Calu3 (cell line): ENCODE measurements at regions of chr2 and their contacts with region 1.

Region 1: DNA sequence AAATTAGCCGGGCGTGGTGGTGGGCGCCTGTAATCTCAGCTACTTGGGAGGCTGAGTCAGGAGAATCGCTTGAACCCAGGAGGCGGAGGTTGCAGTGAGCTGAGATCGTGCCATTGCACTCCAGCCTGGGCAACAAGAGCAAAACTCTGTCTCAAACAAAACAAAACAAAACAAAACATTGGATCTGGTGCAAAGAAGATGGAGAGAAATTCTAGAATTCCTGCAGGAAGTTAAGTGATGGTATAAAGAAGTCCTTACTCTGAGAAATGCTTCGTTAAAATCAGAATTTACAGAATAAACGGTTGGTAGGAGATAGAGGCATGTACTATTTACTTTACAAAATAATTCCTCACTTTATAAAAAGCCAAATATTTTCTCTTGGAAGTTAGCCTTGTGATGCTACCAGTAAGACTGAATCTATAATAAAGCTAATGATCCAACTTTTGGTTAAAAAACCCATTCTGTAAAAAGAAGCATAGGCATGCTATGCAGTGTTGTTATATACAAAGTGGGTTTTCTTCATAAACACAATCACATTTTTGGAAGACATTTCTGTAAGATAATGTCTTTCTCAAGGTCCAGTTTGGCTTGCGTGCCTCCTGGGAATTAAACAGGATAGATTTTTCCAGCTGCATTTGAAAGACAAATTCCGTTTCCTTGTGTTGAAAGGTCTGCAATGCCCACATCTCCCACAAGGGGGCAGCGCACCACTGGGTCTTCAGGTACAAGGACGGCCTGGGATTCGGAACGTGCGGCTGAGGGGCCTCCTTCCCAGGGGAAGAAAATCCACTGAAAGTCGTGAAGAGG is 35.6 kb upstream of the PNO1 start:
- DNase-seq: peak; percentile 87
- H3K4me3 Mint-ChIP-seq: no peak overlapping the region
- H3K27ac Mint-ChIP-seq: no peak overlapping the region
- H3K4me1 Mint-ChIP-seq: no peaks in the 10 kb centered on the region
- H3K27me3 Mint-ChIP-seq: no peaks in the 10 kb centered on the region
- CTCF ChIP-seq: peak; percentile 88

Region 2: DNA sequence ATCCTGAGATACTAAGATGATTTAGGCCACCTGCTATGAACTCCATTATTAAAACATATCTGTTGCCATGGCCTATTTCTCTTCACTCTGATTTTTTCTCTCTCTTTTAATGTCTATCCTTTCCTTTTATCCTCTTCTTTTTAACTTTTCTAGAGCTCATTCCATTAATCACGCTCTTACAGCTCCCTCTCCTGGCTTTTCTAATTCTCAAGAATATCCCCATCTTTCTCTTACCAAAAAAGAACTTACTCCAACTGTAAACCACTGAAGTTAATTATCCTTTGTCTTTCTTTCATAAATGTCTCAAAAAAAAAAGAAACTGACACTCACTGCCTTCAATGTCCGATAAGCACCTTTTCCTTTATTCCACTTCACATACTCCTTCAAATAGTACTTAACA is 122.4 kb after region 1 on chr2:
- CTCF ChIA-PET with region 1: interaction called, 12 read pairs
- intact Hi-C with region 1: no loop called
- DNase-seq: no peak
- H3K4me3 Mint-ChIP-seq: no peak overlapping the region
- H3K27ac Mint-ChIP-seq: no peak overlapping the region
- H3K4me1 Mint-ChIP-seq: peaks cover 11% of the 10 kb centered on the region
- H3K27me3 Mint-ChIP-seq: no peaks in the 10 kb centered on the region
- CTCF ChIP-seq: no peak

Region 3: DNA sequence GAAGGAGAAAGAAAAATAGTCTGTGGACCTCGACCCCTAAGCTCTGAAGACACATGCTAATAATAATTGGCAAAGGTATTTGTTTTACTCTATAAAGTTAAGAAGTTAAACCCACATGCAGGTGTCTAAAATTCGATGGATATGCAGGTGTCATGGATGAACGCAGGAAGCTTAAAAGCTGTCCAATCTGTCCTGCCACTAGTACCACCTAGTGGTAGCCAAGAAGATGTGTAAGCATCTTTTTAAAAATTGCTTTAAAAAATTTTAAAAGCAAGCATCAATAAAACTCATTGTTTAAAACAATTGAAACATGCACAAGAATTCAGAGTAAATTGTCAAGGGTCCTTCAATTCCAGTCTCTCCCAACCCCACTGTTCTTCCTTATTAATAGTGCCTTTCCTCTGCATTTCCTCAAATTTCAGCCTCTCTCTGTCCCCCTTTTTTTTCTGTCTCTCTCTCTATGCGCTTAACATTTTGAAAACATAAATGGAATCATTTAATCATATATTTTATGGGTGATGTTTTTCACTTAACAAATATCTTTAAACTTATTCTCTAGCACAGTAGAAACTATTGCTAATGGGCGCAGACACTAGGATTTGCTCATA is 160.8 kb after region 1 on chr2:
- CTCF ChIA-PET with region 1: interaction called, 11 read pairs
- intact Hi-C with region 1: loop called (anchors 1 kb)
- DNase-seq: peak; percentile 16
- H3K4me3 Mint-ChIP-seq: no peak overlapping the region
- H3K27ac Mint-ChIP-seq: no peak overlapping the region
- H3K4me1 Mint-ChIP-seq: no peaks in the 10 kb centered on the region
- H3K27me3 Mint-ChIP-seq: peaks cover 45% of the 10 kb centered on the region
- CTCF ChIP-seq: peak; percentile 66

Region 4: GRCh38 chr2:68291314-68291713 is 169.2 kb after region 1 on chr2:
- CTCF ChIA-PET with region 1: interaction called, 10 read pairs
- intact Hi-C with region 1: no loop called
- DNase-seq: no peak
- H3K4me3 Mint-ChIP-seq: no peak overlapping the region
- H3K27ac Mint-ChIP-seq: no peak overlapping the region
- H3K4me1 Mint-ChIP-seq: no peaks in the 10 kb centered on the region
- H3K27me3 Mint-ChIP-seq: peaks cover 24% of the 10 kb centered on the region
- CTCF ChIP-seq: no peak

Region 5: GRCh38 chr2:68429311-68429826 is 307.3 kb after region 1 on chr2:
- CTCF ChIA-PET with region 1: no interaction called
- intact Hi-C with region 1: no loop called
- DNase-seq: no peak
- H3K4me3 Mint-ChIP-seq: no peak overlapping the region
- H3K27ac Mint-ChIP-seq: no peak overlapping the region
- H3K4me1 Mint-ChIP-seq: no peaks in the 10 kb centered on the region
- H3K27me3 Mint-ChIP-seq: peaks cover 21% of the 10 kb centered on the region
- CTCF ChIP-seq: no peak

Region 6: DNA sequence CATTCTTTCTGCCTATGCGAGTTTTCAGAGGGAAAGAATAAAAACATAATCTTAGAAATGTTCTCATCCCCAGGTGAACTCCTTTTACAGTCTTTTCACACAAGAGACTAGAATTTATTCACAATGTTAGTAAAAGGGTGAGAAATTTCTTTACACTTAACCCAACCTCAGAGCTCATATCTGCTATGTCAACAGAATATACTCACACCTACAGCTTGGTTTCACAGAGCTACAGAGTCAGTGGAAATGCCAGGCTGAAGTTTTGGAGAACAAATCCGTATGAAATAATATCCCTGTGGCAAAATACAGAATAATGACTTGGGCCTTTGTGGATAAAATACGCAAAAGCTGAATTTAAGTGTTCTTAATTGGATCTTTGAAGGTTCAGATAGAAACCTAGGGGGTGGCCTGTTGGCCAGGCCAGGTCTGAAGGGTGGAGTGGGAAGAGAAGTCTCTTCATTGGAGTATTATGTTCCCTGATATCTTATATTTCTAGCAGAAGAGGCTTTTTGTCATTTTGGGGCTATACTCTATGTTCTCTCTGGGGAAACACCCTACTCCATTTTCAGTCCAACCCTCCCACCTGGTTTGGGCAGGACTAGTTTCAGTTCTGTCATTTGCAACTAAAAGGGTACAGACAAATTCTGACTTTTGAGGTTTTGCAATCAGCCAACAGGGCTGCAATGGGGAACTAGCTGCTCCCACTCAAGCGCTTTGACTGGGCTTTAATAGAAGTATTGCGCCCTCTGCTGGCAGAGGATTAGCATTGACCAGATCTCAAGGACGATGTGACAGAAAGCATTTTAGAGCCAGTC is 319.3 kb after region 1 on chr2:
- CTCF ChIA-PET with region 1: interaction called, 8 read pairs
- intact Hi-C with region 1: loop called (anchors 5 kb)
- DNase-seq: peak; percentile 75
- H3K4me3 Mint-ChIP-seq: no peak overlapping the region
- H3K27ac Mint-ChIP-seq: no peak overlapping the region
- H3K4me1 Mint-ChIP-seq: no peaks in the 10 kb centered on the region
- H3K27me3 Mint-ChIP-seq: peaks cover 20% of the 10 kb centered on the region
- CTCF ChIP-seq: peak; percentile 77

Region 7: GRCh38 chr2:68467077-68467960 is 345.2 kb after region 1 on chr2 and contains the starts of genes APLF and FBXO48:
- CTCF ChIA-PET with region 1: no interaction called
- intact Hi-C with region 1: no loop called
- DNase-seq: peak; percentile 96
- H3K4me3 Mint-ChIP-seq: peak within 1 kb of the TSS; percentile 93
- H3K27ac Mint-ChIP-seq: peak within 1 kb of the TSS; percentile 94
- H3K4me1 Mint-ChIP-seq: peaks cover 21% of the 10 kb centered on the region
- H3K27me3 Mint-ChIP-seq: no peaks in the 10 kb centered on the region
- CTCF ChIP-seq: no peak
- total RNA-seq, gene APLF: 4.2 and 4.5 TPM in 2 replicates
- total RNA-seq, gene FBXO48: 2.4 and 2.5 TPM in 2 replicates

Region 8: GRCh38 chr2:69026026-69026425 is 904.0 kb after region 1 on chr2:
- CTCF ChIA-PET with region 1: no interaction called
- intact Hi-C with region 1: no loop called
- DNase-seq: peak; percentile 66
- H3K4me3 Mint-ChIP-seq: no peak overlapping the region
- H3K27ac Mint-ChIP-seq: no peak overlapping the region
- H3K4me1 Mint-ChIP-seq: no peaks in the 10 kb centered on the region
- H3K27me3 Mint-ChIP-seq: peaks cover 15% of the 10 kb centered on the region
- CTCF ChIP-seq: peak; percentile 57